AG04449 (cell line): ENCODE measurements at regions of chr1 and their contacts with region 1.

Region 1: GRCh38 chr1:165392634-165393571 is 36.4 kb upstream of the LMX1A start:
- DNase-seq: peak; percentile 62
- H3K4me3 ChIP-seq: no peak overlapping the region
- CTCF ChIP-seq: peak; percentile 90

Region 2: GRCh38 chr1:165376041-165376810 is 16.7 kb before region 1 on chr1:
- CTCF ChIA-PET with region 1: interaction called, 28 read pairs
- POLR2A ChIA-PET with region 1: no interaction called
- DNase-seq: no peak
- H3K4me3 ChIP-seq: peak overlapping the region; percentile 37
- CTCF ChIP-seq: no peak

Region 3: GRCh38 chr1:165586435-165586834 is 193.5 kb after region 1 on chr1:
- CTCF ChIA-PET with region 1: interaction called, 277 read pairs
- POLR2A ChIA-PET with region 1: no interaction called
- DNase-seq: no peak
- H3K4me3 ChIP-seq: no peak overlapping the region
- CTCF ChIP-seq: no peak